ENCODE measurements at regions of chr2 and their contacts with region 1.

Region 1: GRCh38 chr2:174697255-174697654 is 67.0 kb downstream of the CHRNA1 start:
- DNase-seq: peak in 1 of 2 donors; percentile 44
- H3K4me3 ChIP-seq: no peak overlapping the region
- H3K27ac ChIP-seq: no peak overlapping the region
- H3K4me1 ChIP-seq: no peaks in the 10 kb centered on the region
- H3K27me3 ChIP-seq: peaks cover 0 to 3% of the 10 kb centered on the region in 2 donors
- CTCF ChIP-seq: peak; percentile 66 to 74

Region 2: DNA sequence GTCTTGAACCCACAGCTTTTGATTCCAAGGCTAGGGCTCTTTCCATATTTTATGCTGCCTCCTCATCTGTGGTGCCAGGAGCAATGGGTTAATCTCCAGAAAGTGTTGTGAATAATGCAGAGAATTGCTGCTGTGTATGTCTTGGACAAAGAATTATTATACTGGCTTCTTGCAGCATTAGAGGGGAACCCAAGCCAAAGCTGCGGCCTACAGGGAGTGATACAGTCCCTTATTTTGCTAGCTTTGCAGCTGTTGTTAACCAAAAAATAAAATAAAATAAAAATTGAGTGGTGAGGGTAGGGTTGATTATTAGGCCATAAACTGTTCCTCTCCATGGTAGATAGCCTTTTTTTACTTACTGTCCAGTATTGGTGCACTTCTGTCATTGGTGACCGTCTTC is 116.3 kb before region 1 on chr2:
- intact Hi-C with region 1: loop called (anchors 5 kb)
- DNase-seq: no peak
- H3K4me3 ChIP-seq: no peak overlapping the region
- H3K27ac ChIP-seq: no peak overlapping the region
- H3K4me1 ChIP-seq: peaks cover 0 to 6% (median 0%) of the 10 kb centered on the region in 4 donors
- H3K27me3 ChIP-seq: no peaks in the 10 kb centered on the region
- CTCF ChIP-seq: no peak

Region 3: GRCh38 chr2:174744111-174744510 is 46.9 kb after region 1 on chr2:
- intact Hi-C with region 1: loop called (anchors 5 kb)
- DNase-seq: no peak
- H3K4me3 ChIP-seq: no peak overlapping the region
- H3K27ac ChIP-seq: no peak overlapping the region
- H3K4me1 ChIP-seq: no peaks in the 10 kb centered on the region
- H3K27me3 ChIP-seq: no peaks in the 10 kb centered on the region
- CTCF ChIP-seq: no peak

Measured in tibial artery (tissue), 4 donors.